Activated T-helper 1 cell treated with anti-CD3 and anti-CD28 coated beads, Interleukin-12 subunit alpha, Interleukin-12 subunit beta, Interleukin-2, Interleukin-4 antibody, amounts not matched to agents 30 ng/mL and 10 ng/mL and 1 ng/mL, durations not matched to agents 14 hours and 24 hours and 36 hours (primary cell): ENCODE measurements at regions of chr21 and their contacts with region 1.

Region 1: GRCh38 chr21:25428537-25428936 is 178.7 kb downstream of the MRPL39 start:
- DNase-seq: no peak
- H3K4me3 Mint-ChIP-seq: no peak overlapping the region
- H3K27ac Mint-ChIP-seq: peak overlapping the region; percentile 30
- H3K4me1 Mint-ChIP-seq: peaks cover 46% of the 10 kb centered on the region
- H3K27me3 Mint-ChIP-seq: no peaks in the 10 kb centered on the region

Region 2: DNA sequence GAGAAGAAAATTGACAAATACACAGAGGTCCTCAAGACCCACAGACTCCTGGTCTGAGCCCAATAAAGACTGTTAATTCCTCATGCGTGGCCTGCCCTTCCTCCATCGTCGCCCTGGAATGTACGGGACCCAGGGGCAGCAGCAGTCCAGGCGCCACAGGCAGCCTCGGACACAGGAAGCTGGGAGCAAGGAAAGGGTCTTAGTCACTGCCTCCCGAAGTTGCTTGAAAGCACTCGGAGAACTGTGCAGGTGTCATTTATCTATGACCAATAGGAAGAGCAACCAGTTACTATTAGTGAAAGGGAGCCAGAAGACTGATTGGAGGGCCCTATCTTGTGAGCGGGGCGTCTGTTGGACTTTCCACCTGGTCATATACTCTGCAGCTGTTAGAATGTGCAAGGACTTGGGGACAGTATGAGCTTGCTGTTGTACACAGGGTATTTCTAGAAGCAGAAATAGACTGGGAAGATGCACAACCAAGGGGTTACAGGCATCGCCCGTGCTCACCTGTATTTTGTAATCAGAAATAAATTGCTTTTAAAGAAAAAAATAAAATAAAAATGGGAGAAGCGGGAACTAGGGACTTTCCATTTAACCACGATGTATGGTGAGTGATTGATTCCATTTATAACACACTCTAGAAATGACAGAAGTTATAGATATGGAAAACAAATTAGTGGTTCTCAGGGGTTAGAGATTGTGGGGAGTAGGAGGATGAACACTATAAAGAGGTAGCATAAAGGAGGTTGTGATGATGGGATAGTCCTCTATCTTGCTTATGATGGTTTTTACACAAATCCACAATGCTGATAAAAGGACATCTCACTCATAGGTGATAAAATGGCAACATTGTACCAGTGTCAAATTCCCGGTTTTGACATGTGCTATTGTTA is 65.9 kb before region 1 on chr21:
- intact Hi-C with region 1: loop called (anchors 2 kb)
- DNase-seq: no peak
- H3K4me3 Mint-ChIP-seq: no peak overlapping the region
- H3K27ac Mint-ChIP-seq: peak overlapping the region; percentile 63
- H3K4me1 Mint-ChIP-seq: peaks cover 8% of the 10 kb centered on the region
- H3K27me3 Mint-ChIP-seq: no peaks in the 10 kb centered on the region